ENCODE measurements at regions of chr10 and their contacts with region 1.

Region 1: DNA sequence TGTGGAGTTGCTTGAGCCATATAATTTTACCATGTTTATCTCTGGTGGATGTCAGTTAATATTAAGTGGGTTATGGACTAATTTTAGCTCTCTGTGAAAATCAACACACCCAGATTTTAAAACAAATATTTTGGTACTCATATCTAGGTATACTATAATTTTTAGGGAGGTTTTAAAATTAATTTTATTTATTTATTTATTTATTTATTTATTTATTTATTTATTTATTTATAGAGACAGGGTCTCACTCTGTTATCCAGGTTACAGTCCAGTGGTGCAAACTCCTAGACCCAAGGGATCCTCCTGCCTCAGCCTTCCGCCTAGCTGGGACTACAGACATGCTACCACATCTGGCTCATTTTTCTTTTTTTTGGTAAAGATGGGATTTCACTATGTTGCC is 7.3 kb upstream of the CREM start:
- DNase-seq: no peak
- H3K4me3 Mint-ChIP-seq: no peak overlapping the region
- H3K27ac Mint-ChIP-seq: no peak overlapping the region
- H3K4me1 Mint-ChIP-seq: peaks cover 6% of the 10 kb centered on the region
- H3K27me3 Mint-ChIP-seq: peaks cover 6% of the 10 kb centered on the region

Region 2: DNA sequence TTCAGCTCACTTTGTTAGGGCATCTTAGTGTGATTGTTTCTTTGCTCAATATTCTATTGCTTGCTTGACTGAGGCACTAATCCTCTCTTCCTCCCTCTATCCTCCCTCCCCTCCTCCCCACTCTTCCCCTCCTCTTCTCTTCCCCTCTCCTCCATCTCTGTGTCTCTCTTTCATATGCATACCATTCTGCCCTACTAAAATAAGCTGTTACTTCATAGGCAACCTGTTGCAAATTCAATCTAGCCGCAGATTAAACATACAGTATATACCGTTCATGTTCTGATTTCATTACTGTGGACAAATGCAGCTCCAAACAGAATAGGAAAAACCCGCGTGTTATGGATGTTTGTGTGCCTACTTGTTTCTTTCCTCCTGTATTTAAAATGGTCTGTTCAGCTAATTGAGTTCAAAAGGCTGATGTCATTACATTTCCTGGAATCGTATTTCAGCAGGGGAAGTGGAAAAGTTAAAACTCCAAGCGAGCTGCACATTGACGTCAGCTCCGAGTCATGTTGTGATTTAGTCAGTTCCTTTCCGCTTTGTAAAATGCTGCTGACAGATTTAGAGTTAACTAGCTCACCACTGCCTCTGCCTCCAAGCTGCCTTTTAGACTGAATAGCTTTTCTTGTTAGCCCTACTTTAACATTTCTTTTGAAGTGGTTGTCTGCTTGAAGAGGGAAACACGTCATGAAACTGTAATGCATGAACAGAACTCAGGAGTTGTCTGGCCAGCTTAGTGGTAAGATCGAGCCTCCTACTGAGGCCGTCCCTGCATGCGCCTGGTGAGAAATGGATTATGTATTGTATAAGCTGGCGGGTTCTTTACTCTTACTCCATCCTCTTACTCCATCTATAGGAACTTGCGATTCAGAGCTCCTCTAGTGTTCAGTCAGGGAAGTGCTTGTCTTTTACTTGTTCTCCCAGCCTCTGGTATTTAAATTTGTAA is 76.3 kb after region 1 on chr10:
- CTCF ChIA-PET with region 1: interaction called, 26 read pairs
- DNase-seq: peak; percentile 89
- H3K4me3 Mint-ChIP-seq: peak overlapping the region; percentile 79
- H3K27ac Mint-ChIP-seq: peak overlapping the region; percentile 100
- H3K4me1 Mint-ChIP-seq: peaks cover 62% of the 10 kb centered on the region
- H3K27me3 Mint-ChIP-seq: no peaks in the 10 kb centered on the region

Region 3: DNA sequence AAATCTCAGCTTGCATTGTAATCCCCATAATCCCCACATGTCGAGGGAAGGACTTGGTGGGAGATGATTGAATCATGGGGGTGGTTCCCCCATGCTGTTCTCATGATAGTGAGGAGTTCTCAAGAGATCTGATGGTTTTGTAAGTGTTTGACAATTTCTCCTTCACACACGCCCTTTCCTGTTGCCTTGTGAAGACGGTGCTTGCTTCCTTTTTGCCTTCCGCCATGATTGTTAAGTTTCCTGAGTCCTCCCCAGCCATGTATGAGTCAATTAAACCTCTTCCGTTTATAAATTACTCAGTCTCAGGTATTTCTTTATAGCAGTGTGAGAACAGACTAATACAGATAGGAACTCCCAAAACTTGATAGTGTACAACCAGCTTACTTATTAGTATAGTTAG is 105.8 kb after region 1 on chr10:
- CTCF ChIA-PET with region 1: interaction called, 26 read pairs
- DNase-seq: no peak
- H3K4me3 Mint-ChIP-seq: no peak overlapping the region
- H3K27ac Mint-ChIP-seq: no peak overlapping the region
- H3K4me1 Mint-ChIP-seq: peaks cover 3% of the 10 kb centered on the region
- H3K27me3 Mint-ChIP-seq: peaks cover 13% of the 10 kb centered on the region

Region 4: DNA sequence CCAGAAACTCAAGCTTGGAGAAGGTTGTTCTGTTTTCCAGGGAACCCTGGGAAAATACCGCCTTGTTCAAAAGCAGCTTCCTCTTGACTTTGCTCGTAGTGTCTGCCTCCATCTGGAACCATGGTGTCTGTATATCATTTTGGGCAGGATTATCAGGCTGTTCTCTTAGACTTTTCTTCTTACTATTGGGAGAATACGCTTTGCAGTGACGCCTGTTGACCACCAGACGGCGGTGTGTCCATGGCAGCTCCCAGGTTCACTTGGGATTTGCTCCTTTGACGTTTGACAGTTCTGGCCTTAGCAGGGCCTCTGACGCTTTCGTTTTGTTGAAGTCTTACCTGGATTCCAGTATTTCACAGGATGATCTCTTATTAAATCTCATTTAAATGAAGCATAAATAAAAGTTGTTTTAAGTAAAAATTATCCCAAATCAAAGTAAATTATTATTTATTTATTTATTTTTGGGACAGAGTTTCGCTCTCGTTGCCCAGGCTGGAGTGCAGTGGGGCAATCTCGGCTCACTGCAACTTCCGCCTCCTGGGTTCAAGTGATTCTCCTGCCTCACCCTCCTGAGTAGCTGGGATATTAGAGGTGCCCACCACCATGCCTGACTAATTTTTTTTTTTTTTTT is 444.0 kb after region 1 on chr10:
- CTCF ChIA-PET with region 1: interaction called, 11 read pairs
- DNase-seq: peak; percentile 59
- H3K4me3 Mint-ChIP-seq: no peak overlapping the region
- H3K27ac Mint-ChIP-seq: no peak overlapping the region
- H3K4me1 Mint-ChIP-seq: peaks cover 9% of the 10 kb centered on the region
- H3K27me3 Mint-ChIP-seq: no peaks in the 10 kb centered on the region

Measured in activated naive CD4-positive, alpha-beta T cell treated with anti-CD3 and anti-CD28 coated beads, Interleukin-2, amount 10 ng/mL, durations not matched to agents 7 days and 5 days (primary cell).